Heart right ventricle (tissue), 16 donors: ENCODE measurements at regions of chr12 and their contacts with region 1.

Region 1: DNA sequence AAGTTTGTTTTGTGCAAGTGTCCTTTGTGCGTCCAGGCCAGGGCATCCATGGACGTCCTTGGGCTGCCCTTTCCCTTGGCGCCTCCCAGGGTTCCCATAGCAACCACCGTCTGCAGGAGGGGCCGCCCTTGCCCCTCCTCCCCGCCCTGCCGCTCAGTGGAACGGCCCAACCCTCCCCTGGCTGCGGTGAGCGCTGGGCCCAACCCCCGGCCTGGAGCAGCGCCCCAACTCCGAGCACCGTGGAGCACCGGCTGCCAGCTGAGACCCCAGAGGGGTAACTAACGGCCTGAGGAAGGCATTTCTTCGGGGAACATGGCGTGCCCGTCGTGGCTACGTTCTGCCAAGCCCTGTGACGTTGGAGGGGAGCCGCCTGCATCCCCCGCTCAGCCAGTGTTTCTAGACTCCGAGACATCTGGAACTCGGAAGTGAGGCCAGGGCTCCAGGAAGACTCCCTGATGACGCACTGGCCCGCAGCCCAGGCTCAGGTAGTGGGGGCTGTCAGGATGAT is 5.3 kb upstream of the ACACB start:
- DNase-seq: peak; percentile 94 to 96
- ATAC-seq: peak; percentile 91 to 96 (median 95)
- H3K4me3 ChIP-seq: peak overlapping the region; percentile 37 to 77 (median 62)
- H3K27ac ChIP-seq: peak overlapping the region; percentile 86 to 99 (median 96)
- H3K4me1 ChIP-seq: peaks cover 10 to 60% (median 47%) of the 10 kb centered on the region in 9 donors
- H3K27me3 ChIP-seq: no peaks in the 10 kb centered on the region
- CTCF ChIP-seq: no peak

Region 2: DNA sequence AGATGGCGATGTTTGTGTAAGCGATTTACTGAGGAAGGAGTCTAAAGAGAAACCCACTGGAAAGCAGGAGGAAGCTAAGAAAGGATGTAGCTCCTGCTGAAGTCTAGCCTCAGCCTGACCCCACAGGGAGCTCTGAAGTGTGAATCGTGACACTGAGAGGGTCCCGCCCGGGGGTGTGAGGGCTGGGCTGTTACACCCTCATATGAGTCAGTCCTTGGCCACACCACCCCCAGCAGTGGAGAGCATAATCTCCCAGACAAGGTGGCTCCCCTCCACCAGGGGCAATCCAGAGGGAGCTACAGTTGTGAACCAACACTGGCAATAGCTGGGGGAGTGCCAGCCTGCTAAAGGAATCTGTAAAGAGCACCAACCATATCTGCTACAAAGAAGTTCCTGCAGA is 121.7 kb before region 1 on chr12:
- intact Hi-C with region 1: no loop called
- DNase-seq: no peak
- ATAC-seq: no peak
- H3K4me3 ChIP-seq: no peak overlapping the region
- H3K27ac ChIP-seq: no peak overlapping the region
- H3K4me1 ChIP-seq: no peaks in the 10 kb centered on the region
- H3K27me3 ChIP-seq: peaks cover 0 to 6% (median 0%) of the 10 kb centered on the region in 7 donors
- CTCF ChIP-seq: no peak

Region 3: GRCh38 chr12:109134186-109134917 is 23.3 kb after region 1 on chr12:
- intact Hi-C with region 1: loop called in 1 of 10 experiments (anchors 2 kb)
- DNase-seq: peak; percentile 34 to 43
- ATAC-seq: peak in 7 of 8 donors; percentile 3 to 30 (median 16)
- H3K4me3 ChIP-seq: no peak overlapping the region
- H3K27ac ChIP-seq: peak overlapping the region in 9 of 10 donors; percentile 30 to 86 (median 52)
- H3K4me1 ChIP-seq: peaks cover 0 to 84% (median 46%) of the 10 kb centered on the region in 9 donors
- H3K27me3 ChIP-seq: no peaks in the 10 kb centered on the region
- CTCF ChIP-seq: peak; percentile 28 to 68 (median 59)

Region 4: DNA sequence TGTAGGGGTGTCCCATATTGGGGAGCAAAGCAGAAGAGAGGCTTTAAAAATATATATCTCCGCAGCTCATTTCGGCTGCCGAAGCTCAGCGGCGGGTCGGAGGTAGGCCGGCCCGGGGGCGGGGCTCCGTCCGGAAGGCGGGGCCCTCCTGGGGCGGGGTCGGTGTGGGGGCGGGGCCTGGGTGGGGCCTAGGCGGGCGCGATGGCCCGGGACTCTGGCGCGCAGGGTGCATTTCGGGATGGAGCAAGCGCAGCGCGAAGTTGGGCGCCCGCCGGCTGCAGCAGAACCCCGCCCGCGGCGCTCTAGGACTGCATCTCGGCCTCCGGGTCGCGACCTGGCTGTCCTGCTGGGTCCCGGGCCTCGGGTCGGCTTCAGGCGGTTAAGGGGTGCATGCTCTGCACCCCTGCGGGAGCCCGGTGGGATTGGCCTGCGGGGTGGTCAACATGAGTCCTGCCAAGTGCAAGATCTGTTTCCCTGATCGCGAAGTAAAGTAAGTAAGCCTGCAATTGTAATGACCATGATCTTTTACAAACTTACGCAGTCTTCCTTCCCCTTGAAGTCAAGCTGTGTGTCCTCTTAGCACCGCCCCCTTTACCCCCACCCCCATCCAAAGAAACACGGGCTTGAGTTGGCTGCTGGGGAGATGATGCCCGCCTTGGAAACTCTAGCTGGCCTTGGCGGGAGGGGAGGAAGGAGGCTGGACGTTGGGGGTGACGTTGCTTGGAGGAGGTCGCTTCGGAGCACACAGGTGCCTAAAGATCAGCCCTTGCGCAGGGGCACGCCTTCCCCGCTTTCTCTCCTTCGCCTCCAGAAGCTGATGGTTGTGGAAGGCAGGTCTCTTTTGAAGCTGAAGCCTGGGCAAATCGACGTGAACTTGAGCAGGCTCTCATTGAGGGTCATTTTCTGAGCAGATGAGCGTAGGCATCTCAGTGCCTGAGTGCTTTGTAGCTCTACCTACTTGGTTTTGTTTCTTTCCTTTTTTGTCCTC is 43.7 kb after region 1 on chr12:
- intact Hi-C with region 1: loop called in 7 of 10 experiments (anchors 2 to 5 kb)
- DNase-seq: peak; percentile 83 to 89
- ATAC-seq: peak; percentile 93 to 98 (median 95)
- H3K4me3 ChIP-seq: peak overlapping the region; percentile 37 to 82 (median 72)
- H3K27ac ChIP-seq: peak overlapping the region; percentile 57 to 91 (median 80)
- H3K4me1 ChIP-seq: peaks cover 10 to 64% (median 53%) of the 10 kb centered on the region in 9 donors
- H3K27me3 ChIP-seq: no peaks in the 10 kb centered on the region
- CTCF ChIP-seq: peak in 1 of 9 donors; percentile 18

Region 5: GRCh38 chr12:109160433-109160832 is 49.4 kb after region 1 on chr12:
- intact Hi-C with region 1: loop called in 7 of 10 experiments (anchors 2 to 5 kb)
- DNase-seq: peak; percentile 28 to 45
- ATAC-seq: peak; percentile 63 to 81 (median 72)
- H3K4me3 ChIP-seq: no peak overlapping the region
- H3K27ac ChIP-seq: peak overlapping the region; percentile 42 to 94 (median 84)
- H3K4me1 ChIP-seq: peaks cover 21 to 91% (median 69%) of the 10 kb centered on the region in 9 donors
- H3K27me3 ChIP-seq: no peaks in the 10 kb centered on the region
- CTCF ChIP-seq: no peak

Region 6: GRCh38 chr12:109165599-109165998 is 54.6 kb after region 1 on chr12:
- intact Hi-C with region 1: loop called in 2 of 10 experiments (anchors 5 kb)
- DNase-seq: no peak
- ATAC-seq: no peak
- H3K4me3 ChIP-seq: no peak overlapping the region
- H3K27ac ChIP-seq: peak overlapping the region in 1 of 10 donors; percentile 94
- H3K4me1 ChIP-seq: peaks cover 9 to 40% (median 34%) of the 10 kb centered on the region in 9 donors
- H3K27me3 ChIP-seq: no peaks in the 10 kb centered on the region
- CTCF ChIP-seq: no peak

Region 7: DNA sequence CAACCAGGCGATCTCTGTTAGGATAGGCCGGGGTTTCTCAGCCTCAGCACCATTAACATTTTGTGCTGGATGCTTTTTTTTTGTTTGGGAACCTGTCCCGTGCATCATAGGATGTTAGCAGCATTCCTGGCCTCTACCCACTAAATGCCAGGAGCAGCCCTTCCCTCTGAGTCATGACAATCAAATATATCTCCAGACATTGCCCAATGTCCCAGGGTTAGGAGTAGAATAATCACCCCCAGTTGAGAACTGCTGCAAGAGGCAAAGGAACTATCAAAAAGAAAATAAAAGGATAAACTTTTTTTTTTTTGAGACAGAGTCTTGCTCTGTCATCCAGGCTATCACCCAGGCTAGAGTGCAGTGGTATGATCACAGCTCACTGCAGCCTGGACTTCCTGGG is 81.3 kb after region 1 on chr12:
- intact Hi-C with region 1: loop called in 1 of 10 experiments (anchors 10 kb)
- DNase-seq: no peak
- ATAC-seq: peak in 3 of 8 donors; percentile 15 to 67 (median 34)
- H3K4me3 ChIP-seq: no peak overlapping the region
- H3K27ac ChIP-seq: peak overlapping the region in 2 of 10 donors; percentile 14 to 15
- H3K4me1 ChIP-seq: peaks cover 0 to 20% (median 0%) of the 10 kb centered on the region in 9 donors
- H3K27me3 ChIP-seq: no peaks in the 10 kb centered on the region
- CTCF ChIP-seq: no peak

Region 8: DNA sequence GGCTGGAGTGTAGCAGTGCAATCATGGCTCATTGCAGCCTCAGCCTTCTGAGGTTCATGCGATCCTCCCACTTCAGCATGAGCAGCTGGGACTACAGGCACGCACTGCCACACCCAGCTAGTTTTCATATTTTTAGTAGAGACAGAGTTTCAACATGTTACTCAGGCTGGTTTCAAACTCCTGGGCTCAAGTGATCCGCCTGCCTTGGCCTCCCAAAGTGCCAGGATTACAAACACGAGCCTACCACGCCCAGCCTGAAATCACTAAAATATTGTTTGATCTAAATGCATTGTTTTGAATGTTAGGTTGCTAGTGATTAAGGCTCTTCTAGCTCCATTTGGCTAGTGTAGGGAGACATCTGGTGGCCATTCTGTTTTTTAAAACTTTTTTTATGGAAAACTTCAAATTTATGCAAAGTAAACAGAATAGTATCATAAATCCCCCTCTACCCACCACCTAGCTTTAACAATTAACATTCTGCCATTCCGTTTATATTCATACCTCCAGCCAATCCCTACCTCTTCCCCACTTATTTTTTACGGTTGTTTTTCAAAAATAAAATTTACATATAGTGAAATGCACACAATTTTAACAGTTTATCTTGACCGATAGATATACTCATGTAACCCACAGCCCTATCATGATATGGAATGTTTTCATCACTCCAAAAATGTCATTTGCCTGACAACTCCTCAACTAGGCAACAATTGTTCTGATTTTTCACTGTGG is 274.5 kb after region 1 on chr12:
- intact Hi-C with region 1: loop called in 2 of 10 experiments (anchors 10 kb)
- DNase-seq: no peak
- ATAC-seq: peak in 7 of 8 donors; percentile 25 to 76 (median 62)
- H3K4me3 ChIP-seq: no peak overlapping the region
- H3K27ac ChIP-seq: no peak overlapping the region
- H3K4me1 ChIP-seq: peaks cover 0 to 6% (median 0%) of the 10 kb centered on the region in 9 donors
- H3K27me3 ChIP-seq: peaks cover 0 to 9% (median 1%) of the 10 kb centered on the region in 7 donors
- CTCF ChIP-seq: peak in 8 of 9 donors; percentile 42 to 72 (median 58)

Region 9: DNA sequence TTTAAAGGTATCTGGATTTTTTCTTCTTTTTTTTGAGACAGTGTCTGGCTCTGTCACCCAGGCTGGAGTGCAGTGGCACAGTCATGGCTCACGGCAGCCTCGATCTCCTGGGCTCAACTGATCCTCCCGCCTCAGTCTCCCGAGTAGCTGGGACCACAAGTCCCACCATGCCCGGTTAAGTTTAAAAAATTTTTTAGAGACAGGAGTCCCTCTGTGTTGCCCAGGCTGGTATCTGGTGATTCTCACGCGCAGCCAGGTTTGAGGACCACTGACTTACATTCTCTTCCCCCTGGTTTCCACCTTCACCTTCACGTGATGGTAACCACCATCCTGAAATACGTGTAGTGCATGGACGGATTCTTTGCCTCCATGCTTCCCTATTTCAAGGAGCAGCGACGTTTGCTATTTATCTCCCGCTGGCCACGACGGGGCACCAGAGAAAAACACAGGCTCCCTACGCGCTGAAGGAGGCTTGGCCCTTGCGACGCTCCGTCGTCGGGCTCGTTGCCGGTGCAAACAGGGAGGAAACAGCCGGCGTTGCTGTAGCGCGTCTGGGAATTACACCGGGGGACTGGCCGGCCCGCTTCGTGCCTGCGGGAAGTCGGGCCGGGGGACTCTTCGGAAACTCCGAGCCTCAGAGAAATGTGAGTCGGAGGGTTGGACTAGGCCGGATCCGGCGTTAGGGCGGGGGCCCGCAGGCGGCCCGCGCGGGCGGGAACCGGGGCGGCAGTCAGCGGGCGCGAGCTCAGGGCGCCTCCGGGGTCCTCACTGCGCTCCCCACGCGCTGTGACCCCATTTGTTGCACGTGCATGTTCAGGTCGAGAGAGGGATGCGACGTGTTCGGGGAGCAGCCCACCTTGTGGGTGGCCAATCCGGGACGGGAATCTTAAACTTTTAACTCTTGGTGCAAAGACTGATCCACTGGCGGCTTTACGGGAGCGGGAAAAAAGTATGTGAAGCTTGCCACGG is 789.0 kb after region 1 on chr12 and contains the start of gene TCHP:
- intact Hi-C with region 1: no loop called
- DNase-seq: peak; percentile 85 to 90
- ATAC-seq: peak; percentile 91 to 97 (median 97)
- H3K4me3 ChIP-seq: peak within 1 kb of the TSS; percentile 62 to 97 (median 80)
- H3K27ac ChIP-seq: peak within 1 kb of the TSS; percentile 11 to 93 (median 84)
- H3K4me1 ChIP-seq: peaks cover 3 to 25% (median 21%) of the 10 kb centered on the region in 9 donors
- H3K27me3 ChIP-seq: no peaks in the 10 kb centered on the region
- CTCF ChIP-seq: peak in 6 of 9 donors; percentile 23 to 61 (median 52)
- total RNA-seq, gene TCHP: 7.0 to 14.1 (median 9.1) TPM